Heart left ventricle (tissue), 16 donors: ENCODE measurements at regions of chr2 and their contacts with region 1.

Region 1: DNA sequence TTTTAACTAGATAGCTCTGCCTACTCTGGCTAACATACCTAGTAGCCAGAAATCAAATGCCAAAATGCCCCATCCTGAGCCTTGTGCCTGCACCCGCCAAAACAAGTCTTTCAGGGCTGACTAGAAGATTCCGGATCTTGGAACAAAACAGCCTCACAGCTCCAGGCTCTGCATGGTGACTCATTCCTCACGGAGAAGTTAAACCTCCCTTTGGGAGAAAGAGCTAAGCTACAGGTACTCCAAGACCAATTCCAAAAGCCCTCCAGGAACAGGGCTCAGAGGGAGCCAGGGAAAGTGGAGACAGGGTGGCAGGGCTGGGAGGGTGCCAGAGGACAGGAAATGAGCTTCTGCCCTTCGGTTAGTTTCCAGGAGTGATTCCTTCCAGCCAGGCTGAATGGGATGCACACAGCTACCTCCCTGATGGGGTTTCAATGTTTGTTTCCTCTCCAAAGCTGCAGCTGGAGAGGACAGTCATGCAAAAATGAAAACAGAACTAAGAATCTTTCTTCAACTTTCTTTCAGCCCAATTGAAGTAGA is 295.6 kb downstream of the TNS1 start:
- DNase-seq: no peak
- ATAC-seq: peak in 3 of 4 donors; percentile 47 to 65 (median 63)
- H3K4me3 ChIP-seq: no peak overlapping the region
- H3K27ac ChIP-seq: peak overlapping the region in 4 of 12 donors; percentile 11 to 53 (median 22)
- H3K4me1 ChIP-seq: peaks cover 0 to 17% (median 5%) of the 10 kb centered on the region in 12 donors
- H3K27me3 ChIP-seq: no peaks in the 10 kb centered on the region
- CTCF ChIP-seq: no peak
- POLR2A ChIP-seq: no peak

Region 2: GRCh38 chr2:217672491-217672900 is 34.7 kb before region 1 on chr2:
- intact Hi-C with region 1: loop called in 1 of 10 experiments (anchors 5 kb)
- DNase-seq: no peak
- ATAC-seq: no peak
- H3K4me3 ChIP-seq: no peak overlapping the region
- H3K27ac ChIP-seq: no peak overlapping the region
- H3K4me1 ChIP-seq: peaks cover 0 to 15% (median 0%) of the 10 kb centered on the region in 12 donors
- H3K27me3 ChIP-seq: no peaks in the 10 kb centered on the region
- CTCF ChIP-seq: no peak
- POLR2A ChIP-seq: no peak